Activated T-helper 1 cell treated with anti-CD3 and anti-CD28 coated beads, Interleukin-12 subunit alpha, Interleukin-12 subunit beta, Interleukin-2, Interleukin-4 antibody, amounts not matched to agents 30 ng/mL and 10 ng/mL and 1 ng/mL, durations not matched to agents 14 hours and 24 hours and 36 hours (primary cell): ENCODE measurements at regions of chr3 and their contacts with region 1.

Region 1: DNA sequence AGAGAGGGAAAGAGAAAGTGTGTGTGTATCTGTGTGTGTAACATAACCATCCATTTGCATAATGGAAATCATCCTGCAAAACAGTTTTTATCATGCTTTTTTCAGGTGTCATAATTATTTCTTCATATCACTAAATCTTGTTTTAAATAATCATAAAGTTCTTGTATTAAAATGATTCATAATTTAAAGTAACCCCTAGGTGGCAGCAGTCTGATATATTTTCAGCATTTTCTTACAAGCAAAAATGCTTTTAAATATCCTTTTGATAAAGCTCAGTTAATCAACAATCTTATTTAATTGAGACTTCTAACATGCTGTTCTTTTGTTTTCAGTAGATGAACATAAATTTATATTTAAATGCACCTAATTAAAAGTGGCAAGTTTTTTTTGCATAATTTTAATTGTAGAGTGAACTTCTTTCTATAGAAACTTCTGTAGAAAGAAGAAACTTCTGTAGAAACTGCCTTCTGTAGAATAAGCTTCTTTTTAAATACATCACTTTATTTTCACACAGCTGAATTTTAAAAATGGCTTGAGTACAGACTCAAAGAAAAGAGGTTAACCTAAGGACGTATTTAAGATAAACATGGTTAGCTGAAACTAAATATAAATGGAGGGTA is 72.5 kb downstream of the OPA1 start:
- DNase-seq: no peak
- H3K4me3 Mint-ChIP-seq: no peak overlapping the region
- H3K27ac Mint-ChIP-seq: no peak overlapping the region
- H3K4me1 Mint-ChIP-seq: no peaks in the 10 kb centered on the region
- H3K27me3 Mint-ChIP-seq: no peaks in the 10 kb centered on the region

Region 2: DNA sequence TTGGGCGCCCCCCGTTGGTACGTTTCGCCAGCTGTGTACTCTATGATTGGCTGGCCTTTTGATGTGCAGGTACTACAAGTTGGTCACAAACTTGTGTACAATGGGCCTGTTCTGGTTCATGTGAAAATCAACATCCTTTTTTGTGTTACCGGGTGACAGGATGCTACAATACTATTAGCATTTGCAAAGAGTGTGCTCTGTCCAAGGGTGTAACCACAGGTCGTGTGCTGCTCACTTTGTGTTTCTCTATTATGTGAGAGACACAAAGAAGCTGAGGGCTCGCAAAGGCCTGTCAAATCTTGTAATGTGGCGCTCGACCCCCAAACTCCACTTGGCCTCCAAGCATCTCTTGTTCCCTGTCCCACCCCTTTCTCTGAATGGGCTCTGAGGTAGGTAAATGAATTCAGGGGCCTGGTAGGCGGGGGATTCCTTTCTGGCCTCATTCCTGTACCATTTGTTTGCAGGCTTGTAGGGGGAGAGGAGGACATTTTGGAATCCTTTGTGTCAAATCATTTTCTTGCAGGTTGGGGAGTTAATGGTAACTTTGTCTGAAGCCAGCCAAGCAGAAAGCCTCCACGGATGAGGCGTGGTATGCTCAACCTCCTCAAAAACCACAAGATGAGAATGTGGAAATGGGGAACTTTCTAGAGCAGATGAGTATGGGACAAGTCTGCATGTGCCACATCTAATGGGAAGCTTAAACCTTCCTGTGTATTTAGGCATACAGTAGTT is 36.6 kb after region 1 on chr3:
- intact Hi-C with region 1: no loop called
- DNase-seq: no peak
- H3K4me3 Mint-ChIP-seq: no peak overlapping the region
- H3K27ac Mint-ChIP-seq: no peak overlapping the region
- H3K4me1 Mint-ChIP-seq: peaks cover 11% of the 10 kb centered on the region
- H3K27me3 Mint-ChIP-seq: no peaks in the 10 kb centered on the region

Region 3: DNA sequence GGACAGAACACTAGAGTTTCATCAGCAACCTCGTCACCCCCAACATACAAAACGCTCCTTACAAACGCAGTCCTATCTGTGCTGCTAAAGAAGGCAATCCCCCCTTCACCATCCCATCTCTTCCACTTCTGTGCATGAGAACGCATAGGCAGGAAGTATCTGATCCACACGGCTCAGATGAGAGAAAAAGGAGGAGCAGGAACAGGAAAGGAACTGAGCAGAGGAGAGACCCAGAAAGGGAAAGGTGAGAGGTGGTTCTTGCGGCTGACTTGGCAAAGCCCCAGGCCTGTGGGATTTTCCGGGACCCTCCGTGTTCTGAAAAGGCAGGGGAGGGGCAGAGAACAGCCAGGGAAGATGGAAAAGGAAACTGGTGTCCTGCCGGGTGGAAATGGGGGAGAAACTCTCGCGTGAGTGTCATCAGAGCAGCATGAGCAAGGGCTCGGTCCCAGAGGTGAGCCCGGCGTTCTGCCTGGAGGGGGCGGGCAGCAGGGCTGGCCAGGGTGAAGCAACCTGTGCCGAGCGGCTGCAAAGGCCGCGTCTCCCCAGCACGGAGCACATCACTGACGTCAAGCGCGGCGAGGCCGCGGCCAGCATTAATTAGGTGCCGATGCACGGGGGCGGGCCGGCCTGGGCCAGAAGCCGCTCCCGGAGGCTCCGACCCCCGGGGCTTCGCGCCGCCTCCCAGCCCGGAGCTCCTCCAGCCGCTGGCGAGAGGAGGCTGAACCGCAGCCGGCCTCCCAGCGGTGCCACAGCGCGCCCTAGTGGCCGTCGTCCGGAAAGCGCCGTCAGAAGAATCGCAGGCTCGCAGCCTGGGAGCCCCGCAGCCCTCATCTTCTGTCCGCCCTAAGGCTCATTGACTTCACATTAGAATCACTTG is 649.8 kb after region 1 on chr3:
- intact Hi-C with region 1: loop called (anchors 1 kb)
- DNase-seq: peak; percentile 79
- H3K4me3 Mint-ChIP-seq: peak overlapping the region; percentile 83
- H3K27ac Mint-ChIP-seq: no peak overlapping the region
- H3K4me1 Mint-ChIP-seq: peaks cover 43% of the 10 kb centered on the region
- H3K27me3 Mint-ChIP-seq: peaks cover 7% of the 10 kb centered on the region

Region 4: GRCh38 chr3:194344012-194344411 is 678.5 kb after region 1 on chr3:
- intact Hi-C with region 1: loop called (anchors 1 kb)
- DNase-seq: peak; percentile 48
- H3K4me3 Mint-ChIP-seq: no peak overlapping the region
- H3K27ac Mint-ChIP-seq: no peak overlapping the region
- H3K4me1 Mint-ChIP-seq: peaks cover 7% of the 10 kb centered on the region
- H3K27me3 Mint-ChIP-seq: peaks cover 15% of the 10 kb centered on the region

Region 5: DNA sequence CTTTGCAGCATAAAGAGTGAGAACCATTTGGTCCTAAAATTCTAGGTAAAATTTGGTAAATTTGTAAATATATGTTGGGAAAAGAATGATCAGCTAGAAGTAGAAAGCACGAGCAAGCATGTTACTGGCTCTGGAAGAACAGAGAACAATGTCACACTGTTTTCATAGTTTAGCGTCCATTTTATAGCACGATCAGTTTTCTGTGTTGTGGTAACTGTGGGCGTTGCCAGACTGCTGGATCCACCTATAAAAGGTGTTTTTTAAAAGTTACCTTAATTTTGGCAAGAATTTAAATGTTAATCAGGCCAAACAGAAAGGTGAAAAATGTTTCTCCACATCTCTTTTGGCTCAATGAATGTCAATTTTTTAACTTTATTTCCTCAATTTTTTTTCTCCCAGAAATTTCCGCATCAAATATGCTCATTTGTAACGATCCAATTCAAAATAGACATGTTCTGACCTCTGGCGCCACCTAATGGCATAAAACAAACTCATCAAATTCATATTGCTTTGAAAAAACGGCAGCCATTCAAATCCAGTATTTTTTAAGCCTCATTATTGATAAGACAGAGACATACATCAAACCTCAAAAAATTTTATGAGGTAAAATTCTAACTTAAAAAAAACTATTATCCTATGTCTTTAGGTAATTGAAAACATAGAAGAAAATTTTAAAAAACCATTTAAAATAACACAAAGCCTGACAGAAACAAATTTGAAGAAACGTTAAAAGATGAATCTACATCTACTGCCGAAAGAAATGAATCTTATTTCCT is 739.1 kb after region 1 on chr3:
- intact Hi-C with region 1: loop called (anchors 10 kb)
- DNase-seq: no peak
- H3K4me3 Mint-ChIP-seq: no peak overlapping the region
- H3K27ac Mint-ChIP-seq: no peak overlapping the region
- H3K4me1 Mint-ChIP-seq: peaks cover 23% of the 10 kb centered on the region
- H3K27me3 Mint-ChIP-seq: peaks cover 2% of the 10 kb centered on the region